WTC11 (cell line): ENCODE measurements at regions of chr7 and their contacts with region 1.

Region 1: GRCh38 chr7:91549878-91550277 is 285.6 kb downstream of the FZD1 start:
- DNase-seq: no peak
- ATAC-seq: no peak; the same call in 1 of the 2 replicates
- H3K4me3 Mint-ChIP-seq: no peak overlapping the region
- H3K27ac Mint-ChIP-seq: no peak overlapping the region
- H3K4me1 Mint-ChIP-seq: peaks cover 3% of the 10 kb centered on the region
- H3K27me3 Mint-ChIP-seq: no peaks in the 10 kb centered on the region; the same call in 1 of the 2 replicates
- CTCF ChIP-seq: no peak

Region 2: GRCh38 chr7:91527460-91527859 is 22.4 kb before region 1 on chr7:
- CTCF ChIA-PET with region 1: no interaction called
- POLR2A ChIA-PET with region 1: interaction called, 11 read pairs
- DNase-seq: no peak
- ATAC-seq: peak; percentile 36; the same call in 1 of the 2 replicates
- H3K4me3 Mint-ChIP-seq: no peak overlapping the region
- H3K27ac Mint-ChIP-seq: no peak overlapping the region
- H3K4me1 Mint-ChIP-seq: peaks cover 11% of the 10 kb centered on the region
- H3K27me3 Mint-ChIP-seq: no peaks in the 10 kb centered on the region; the same call in 1 of the 2 replicates
- CTCF ChIP-seq: no peak